Naive thymus-derived CD4-positive, alpha-beta T cell (primary cell): ENCODE measurements at regions of chr11 and their contacts with region 1.

Region 1: GRCh38 chr11:95231127-95231880 is at the start of gene SESN3:
- DNase-seq: peak; percentile 96 to 100 (median 99)
- ATAC-seq: peak; percentile 92
- H3K4me3 ChIP-seq: peak within 1 kb of the TSS; percentile 82
- H3K4me3 Mint-ChIP-seq: peak within 1 kb of the TSS in 6 of 10 donors; percentile 93 to 98 (median 96)
- H3K27ac ChIP-seq: peak within 1 kb of the TSS; percentile 77
- H3K27ac Mint-ChIP-seq: peak within 1 kb of the TSS; percentile 35 to 97 (median 90)
- H3K4me1 ChIP-seq: peaks cover 16 to 24% of the 10 kb centered on the region in 2 donors
- H3K4me1 Mint-ChIP-seq: peaks cover 37 to 71% (median 50%) of the 10 kb centered on the region in 7 donors
- H3K27me3 ChIP-seq: no peaks in the 10 kb centered on the region
- H3K27me3 Mint-ChIP-seq: peaks cover 0 to 5% (median 0%) of the 10 kb centered on the region in 5 donors
- total RNA-seq, gene SESN3: 77.5 to 262 (median 133) TPM

Region 2: DNA sequence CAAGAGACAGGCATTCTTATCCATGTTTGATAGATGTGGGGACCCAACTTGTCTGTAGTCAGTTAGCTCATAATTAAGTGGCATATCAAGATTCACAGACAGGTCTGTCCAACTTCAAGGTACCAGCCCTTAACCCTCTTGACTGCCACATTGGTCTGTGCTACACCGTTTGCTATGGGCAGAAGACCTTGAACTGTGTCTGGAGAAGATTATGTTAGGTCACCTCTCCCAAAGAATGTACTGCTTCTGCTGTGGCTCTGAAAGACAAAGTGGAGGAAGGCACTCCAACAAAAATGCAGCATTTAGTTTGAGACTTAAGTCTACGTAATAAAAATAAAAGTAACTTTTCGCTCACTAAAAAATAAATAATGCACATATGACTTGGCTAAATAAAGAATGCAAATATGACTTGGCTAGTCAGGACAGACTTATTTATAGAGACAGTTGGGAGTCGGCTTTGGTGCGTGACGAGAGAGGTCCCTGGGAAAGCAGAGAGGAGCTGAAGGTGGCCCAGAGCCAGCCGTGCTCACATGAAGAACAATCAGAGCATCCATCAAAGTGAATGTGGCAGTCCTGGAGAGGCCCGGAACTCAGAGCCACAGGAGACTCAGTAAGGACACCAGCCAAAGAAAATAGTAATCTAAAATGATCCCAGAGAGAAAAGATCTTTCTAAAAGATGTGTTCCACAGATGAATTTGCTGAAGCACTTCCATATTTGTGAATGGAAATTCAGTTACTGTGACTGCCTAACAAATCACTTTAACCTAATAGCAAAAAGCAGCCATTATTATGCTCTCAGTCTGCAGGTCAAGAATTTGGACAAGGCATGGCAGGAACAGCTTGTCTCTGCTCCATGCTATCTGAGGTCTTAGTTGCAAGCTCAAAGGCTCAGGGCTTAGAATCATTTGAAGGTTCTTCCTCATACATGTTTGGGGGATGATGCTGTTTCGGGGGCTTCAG is 292.9 kb before region 1 on chr11:
- CTCF ChIA-PET with region 1: no interaction called
- POLR2A ChIA-PET with region 1: no interaction called
- intact Hi-C with region 1: no loop called
- DNase-seq: no peak
- ATAC-seq: no peak
- H3K4me3 ChIP-seq: no peak overlapping the region
- H3K4me3 Mint-ChIP-seq: no peak overlapping the region
- H3K27ac ChIP-seq: no peak overlapping the region
- H3K27ac Mint-ChIP-seq: no peak overlapping the region
- H3K4me1 ChIP-seq: peaks cover 0 to 23% of the 10 kb centered on the region in 2 donors
- H3K4me1 Mint-ChIP-seq: peaks cover 20 to 44% (median 38%) of the 10 kb centered on the region in 7 donors
- H3K27me3 ChIP-seq: no peaks in the 10 kb centered on the region
- H3K27me3 Mint-ChIP-seq: peaks cover 0 to 5% (median 2%) of the 10 kb centered on the region in 5 donors

Region 3: DNA sequence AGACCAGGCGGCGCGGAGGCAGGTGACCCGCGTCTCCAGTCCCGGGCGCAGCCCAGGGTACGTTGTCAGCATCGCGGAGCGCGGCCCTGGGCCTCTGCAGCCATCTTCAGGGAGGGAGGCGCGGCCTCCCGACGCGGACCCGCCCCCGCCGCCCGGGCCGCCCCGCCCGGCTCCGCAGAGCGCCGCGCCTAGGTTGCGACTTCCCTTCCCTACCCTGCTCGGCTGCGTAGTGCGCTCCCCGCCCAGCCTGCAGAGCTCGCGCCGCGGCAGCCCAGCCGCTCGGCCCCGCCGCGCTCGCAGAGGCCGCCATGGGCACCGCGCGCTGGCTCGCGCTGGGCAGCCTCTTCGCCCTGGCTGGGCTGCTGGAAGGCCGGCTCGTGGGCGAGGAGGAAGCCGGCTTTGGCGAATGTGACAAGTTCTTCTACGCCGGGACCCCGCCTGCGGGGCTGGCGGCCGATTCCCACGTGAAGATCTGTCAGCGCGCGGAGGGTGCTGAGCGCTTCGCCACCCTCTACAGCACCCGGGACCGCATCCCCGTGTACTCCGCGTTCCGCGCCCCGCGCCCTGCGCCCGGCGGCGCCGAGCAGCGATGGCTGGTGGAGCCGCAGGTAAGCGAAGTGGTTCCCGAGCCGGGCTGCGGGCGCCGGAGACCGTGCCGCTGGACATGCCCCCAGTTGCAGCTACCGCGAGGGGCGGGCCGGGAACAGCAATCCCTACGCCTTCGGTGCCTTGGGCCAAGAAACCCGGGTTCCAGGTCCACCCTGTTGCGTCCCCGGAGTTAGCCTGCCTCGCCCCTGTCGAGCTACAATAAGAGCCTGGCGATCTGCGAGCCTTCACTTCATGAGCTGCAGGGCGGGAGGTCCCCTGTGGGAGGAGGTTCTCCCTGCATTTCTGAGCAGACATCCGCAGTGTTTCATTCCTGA is 141.4 kb before region 1 on chr11 and contains the start of gene ENDOD1:
- CTCF ChIA-PET with region 1: no interaction called
- POLR2A ChIA-PET with region 1: interaction called, 15 read pairs
- intact Hi-C with region 1: loop called (anchors 1 kb)
- DNase-seq: peak; percentile 81 to 89 (median 87)
- ATAC-seq: peak; percentile 98
- H3K4me3 ChIP-seq: peak within 1 kb of the TSS; percentile 79
- H3K4me3 Mint-ChIP-seq: peak within 1 kb of the TSS; percentile 86 to 95 (median 92)
- H3K27ac ChIP-seq: peak within 1 kb of the TSS; percentile 87
- H3K27ac Mint-ChIP-seq: peak within 1 kb of the TSS; percentile 96 to 99 (median 98)
- H3K4me1 ChIP-seq: peaks cover 16 to 31% of the 10 kb centered on the region in 2 donors
- H3K4me1 Mint-ChIP-seq: peaks cover 24 to 61% (median 49%) of the 10 kb centered on the region in 7 donors
- H3K27me3 ChIP-seq: no peaks in the 10 kb centered on the region
- H3K27me3 Mint-ChIP-seq: no peaks in the 10 kb centered on the region
- total RNA-seq, gene ENDOD1: 4.7 to 23.2 (median 8.6) TPM

Region 4: DNA sequence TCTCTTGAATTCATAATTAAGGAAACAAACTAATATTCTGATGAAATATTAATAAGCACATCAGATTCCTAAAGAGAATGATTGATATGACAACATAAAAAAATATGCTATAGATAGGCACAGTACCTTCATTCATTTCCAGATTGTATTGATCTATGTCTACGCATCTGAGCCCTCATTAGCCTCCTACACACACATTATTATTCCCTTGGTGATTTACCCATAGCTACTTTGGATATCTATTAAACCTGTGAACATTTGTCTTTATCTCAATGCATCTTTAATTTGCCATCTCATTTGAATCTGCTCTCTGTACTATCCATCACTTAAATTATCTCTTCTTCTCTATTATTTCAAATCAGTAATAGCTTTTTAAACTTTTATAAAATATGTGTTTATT is 18.7 kb before region 1 on chr11:
- CTCF ChIA-PET with region 1: no interaction called
- POLR2A ChIA-PET with region 1: interaction called, 18 read pairs
- intact Hi-C with region 1: loop called in 1 of 2 experiments (anchors 2 kb)
- DNase-seq: no peak
- ATAC-seq: no peak
- H3K4me3 ChIP-seq: no peak overlapping the region
- H3K4me3 Mint-ChIP-seq: peak overlapping the region in 1 of 10 donors; percentile 10
- H3K27ac ChIP-seq: no peak overlapping the region
- H3K27ac Mint-ChIP-seq: peak overlapping the region in 1 of 9 donors; percentile 60
- H3K4me1 ChIP-seq: peaks cover 0 to 6% of the 10 kb centered on the region in 2 donors
- H3K4me1 Mint-ChIP-seq: peaks cover 5 to 54% (median 41%) of the 10 kb centered on the region in 7 donors
- H3K27me3 ChIP-seq: no peaks in the 10 kb centered on the region
- H3K27me3 Mint-ChIP-seq: no peaks in the 10 kb centered on the region

Region 5: GRCh38 chr11:95337175-95337957 is 106.1 kb after region 1 on chr11:
- CTCF ChIA-PET with region 1: no interaction called
- POLR2A ChIA-PET with region 1: interaction called, 15 read pairs
- intact Hi-C with region 1: loop called (anchors 1 kb)
- DNase-seq: peak; percentile 12 to 55 (median 39)
- ATAC-seq: peak; percentile 69
- H3K4me3 ChIP-seq: peak overlapping the region; percentile 36
- H3K4me3 Mint-ChIP-seq: no peak overlapping the region
- H3K27ac ChIP-seq: peak overlapping the region; percentile 59
- H3K27ac Mint-ChIP-seq: no peak overlapping the region
- H3K4me1 ChIP-seq: peaks cover 4 to 20% of the 10 kb centered on the region in 2 donors
- H3K4me1 Mint-ChIP-seq: peaks cover 0 to 12% (median under 1%) of the 10 kb centered on the region in 7 donors
- H3K27me3 ChIP-seq: no peaks in the 10 kb centered on the region
- H3K27me3 Mint-ChIP-seq: no peaks in the 10 kb centered on the region

Region 6: GRCh38 chr11:95398437-95399112 is 167.3 kb after region 1 on chr11:
- CTCF ChIA-PET with region 1: no interaction called
- POLR2A ChIA-PET with region 1: no interaction called
- intact Hi-C with region 1: no loop called
- DNase-seq: no peak
- ATAC-seq: no peak
- H3K4me3 ChIP-seq: no peak overlapping the region
- H3K4me3 Mint-ChIP-seq: no peak overlapping the region
- H3K27ac ChIP-seq: no peak overlapping the region
- H3K27ac Mint-ChIP-seq: no peak overlapping the region
- H3K4me1 ChIP-seq: no peaks in the 10 kb centered on the region
- H3K4me1 Mint-ChIP-seq: peaks cover 0 to 5% (median 4%) of the 10 kb centered on the region in 7 donors
- H3K27me3 ChIP-seq: no peaks in the 10 kb centered on the region
- H3K27me3 Mint-ChIP-seq: peaks cover 0 to 3% (median 0%) of the 10 kb centered on the region in 5 donors

Region 7: GRCh38 chr11:95556342-95557163 is 325.2 kb after region 1 on chr11:
- CTCF ChIA-PET with region 1: no interaction called
- POLR2A ChIA-PET with region 1: interaction called, 4 read pairs
- intact Hi-C with region 1: loop called in 1 of 2 experiments (anchors 2 kb)
- DNase-seq: peak in 1 of 9 donors; percentile 38
- ATAC-seq: no peak
- H3K4me3 ChIP-seq: no peak overlapping the region
- H3K4me3 Mint-ChIP-seq: peak overlapping the region in 1 of 10 donors; percentile 58
- H3K27ac ChIP-seq: no peak overlapping the region
- H3K27ac Mint-ChIP-seq: peak overlapping the region in 3 of 9 donors; percentile 7 to 75 (median 12)
- H3K4me1 ChIP-seq: no peaks in the 10 kb centered on the region
- H3K4me1 Mint-ChIP-seq: peaks cover 0 to 38% (median 12%) of the 10 kb centered on the region in 7 donors
- H3K27me3 ChIP-seq: no peaks in the 10 kb centered on the region
- H3K27me3 Mint-ChIP-seq: peaks cover 0 to 4% (median 0%) of the 10 kb centered on the region in 5 donors

Region 8: GRCh38 chr11:95705485-95706124 is 474.3 kb after region 1 on chr11:
- CTCF ChIA-PET with region 1: interaction called, 46 read pairs
- POLR2A ChIA-PET with region 1: interaction called, 118 read pairs
- intact Hi-C with region 1: loop called (anchors 1 kb)
- DNase-seq: peak; percentile 67 to 91 (median 86)
- ATAC-seq: peak; percentile 98
- H3K4me3 ChIP-seq: no peak overlapping the region
- H3K4me3 Mint-ChIP-seq: no peak overlapping the region
- H3K27ac ChIP-seq: peak overlapping the region; percentile 55
- H3K27ac Mint-ChIP-seq: no peak overlapping the region
- H3K4me1 ChIP-seq: peaks cover 29 to 43% of the 10 kb centered on the region in 2 donors
- H3K4me1 Mint-ChIP-seq: peaks cover 3 to 15% (median 11%) of the 10 kb centered on the region in 7 donors
- H3K27me3 ChIP-seq: no peaks in the 10 kb centered on the region
- H3K27me3 Mint-ChIP-seq: peaks cover 0 to 3% (median 0%) of the 10 kb centered on the region in 5 donors